ENCODE measurements at regions of chr1 and their contacts with region 1.

Region 1: GRCh38 chr1:26321315-26322041 is 3.7 kb downstream of the CD52 start:
- H3K4me3 Mint-ChIP-seq: peak overlapping the region; percentile 58
- H3K27ac Mint-ChIP-seq: peak overlapping the region; percentile 85
- H3K4me1 Mint-ChIP-seq: peaks cover 57% of the 10 kb centered on the region
- H3K27me3 Mint-ChIP-seq: no peaks in the 10 kb centered on the region

Region 2: GRCh38 chr1:26111530-26112406 is 209.7 kb before region 1 on chr1 and contains the start of gene PDIK1L:
- intact Hi-C with region 1: loop called (anchors 5 kb)
- H3K4me3 Mint-ChIP-seq: peak within 1 kb of the TSS; percentile 95
- H3K27ac Mint-ChIP-seq: peak within 1 kb of the TSS; percentile 88
- H3K4me1 Mint-ChIP-seq: peaks cover 10% of the 10 kb centered on the region
- H3K27me3 Mint-ChIP-seq: no peaks in the 10 kb centered on the region

Region 3: GRCh38 chr1:26169669-26170471 is 151.6 kb before region 1 on chr1 and contains the start of gene ZNF593:
- intact Hi-C with region 1: loop called (anchors 5 kb)
- H3K4me3 Mint-ChIP-seq: peak within 1 kb of the TSS; percentile 93
- H3K27ac Mint-ChIP-seq: peak within 1 kb of the TSS; percentile 91
- H3K4me1 Mint-ChIP-seq: peaks cover 25% of the 10 kb centered on the region
- H3K27me3 Mint-ChIP-seq: peaks cover 17% of the 10 kb centered on the region

Region 4: DNA sequence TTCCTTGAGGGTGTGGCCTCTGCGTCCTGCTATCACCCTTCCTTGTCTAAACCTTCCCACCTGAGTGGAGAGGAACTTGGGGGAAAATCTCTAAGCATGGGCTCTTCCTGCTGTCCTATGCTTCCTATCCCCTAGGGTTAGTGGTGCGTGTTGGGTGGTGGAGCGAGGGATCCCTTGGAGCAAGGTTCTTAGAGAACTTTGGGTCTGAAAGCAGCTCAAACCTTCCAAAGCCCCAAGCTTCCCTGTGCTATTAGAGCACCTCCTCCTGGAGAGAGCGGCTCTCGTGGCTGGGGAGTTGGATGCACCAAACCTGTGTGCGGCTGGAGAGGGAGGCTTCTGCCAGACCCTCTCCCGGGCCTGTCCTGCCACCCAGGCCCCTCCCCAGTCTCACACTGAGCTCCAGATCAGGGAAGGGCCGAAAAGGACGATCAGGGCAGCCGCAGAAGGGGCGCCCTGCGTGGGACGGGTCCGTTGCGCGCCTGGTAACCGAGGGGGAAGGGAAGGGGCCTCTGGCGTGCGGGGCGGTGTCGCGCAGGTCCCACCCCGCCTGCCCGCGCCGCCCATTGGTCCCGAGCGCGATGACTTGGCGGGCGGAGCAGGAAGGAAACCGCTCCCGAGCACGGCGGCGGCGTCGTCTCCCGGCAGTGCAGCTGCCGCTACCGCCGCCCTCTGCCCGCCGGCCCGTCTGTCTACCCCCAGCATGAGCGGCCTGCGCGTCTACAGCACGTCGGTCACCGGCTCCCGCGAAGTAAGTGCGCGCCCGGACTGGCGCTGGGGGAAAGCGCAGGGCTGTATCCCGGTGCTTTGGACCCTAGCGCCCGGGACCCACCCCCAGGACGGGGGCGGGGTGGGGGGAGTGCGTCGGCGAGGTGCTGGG is 41.8 kb before region 1 on chr1 and contains the start of gene SH3BGRL3:
- intact Hi-C with region 1: loop called (anchors 2 kb)
- H3K4me3 Mint-ChIP-seq: peak within 1 kb of the TSS; percentile 86
- H3K27ac Mint-ChIP-seq: peak within 1 kb of the TSS; percentile 94
- H3K4me1 Mint-ChIP-seq: peaks cover 92% of the 10 kb centered on the region
- H3K27me3 Mint-ChIP-seq: no peaks in the 10 kb centered on the region

Region 5: GRCh38 chr1:26284597-26285360 is 36.7 kb before region 1 on chr1:
- intact Hi-C with region 1: loop called (anchors 1 kb)
- H3K4me3 Mint-ChIP-seq: peak overlapping the region; percentile 51
- H3K27ac Mint-ChIP-seq: peak overlapping the region; percentile 94
- H3K4me1 Mint-ChIP-seq: peaks cover 93% of the 10 kb centered on the region
- H3K27me3 Mint-ChIP-seq: no peaks in the 10 kb centered on the region

Region 6: DNA sequence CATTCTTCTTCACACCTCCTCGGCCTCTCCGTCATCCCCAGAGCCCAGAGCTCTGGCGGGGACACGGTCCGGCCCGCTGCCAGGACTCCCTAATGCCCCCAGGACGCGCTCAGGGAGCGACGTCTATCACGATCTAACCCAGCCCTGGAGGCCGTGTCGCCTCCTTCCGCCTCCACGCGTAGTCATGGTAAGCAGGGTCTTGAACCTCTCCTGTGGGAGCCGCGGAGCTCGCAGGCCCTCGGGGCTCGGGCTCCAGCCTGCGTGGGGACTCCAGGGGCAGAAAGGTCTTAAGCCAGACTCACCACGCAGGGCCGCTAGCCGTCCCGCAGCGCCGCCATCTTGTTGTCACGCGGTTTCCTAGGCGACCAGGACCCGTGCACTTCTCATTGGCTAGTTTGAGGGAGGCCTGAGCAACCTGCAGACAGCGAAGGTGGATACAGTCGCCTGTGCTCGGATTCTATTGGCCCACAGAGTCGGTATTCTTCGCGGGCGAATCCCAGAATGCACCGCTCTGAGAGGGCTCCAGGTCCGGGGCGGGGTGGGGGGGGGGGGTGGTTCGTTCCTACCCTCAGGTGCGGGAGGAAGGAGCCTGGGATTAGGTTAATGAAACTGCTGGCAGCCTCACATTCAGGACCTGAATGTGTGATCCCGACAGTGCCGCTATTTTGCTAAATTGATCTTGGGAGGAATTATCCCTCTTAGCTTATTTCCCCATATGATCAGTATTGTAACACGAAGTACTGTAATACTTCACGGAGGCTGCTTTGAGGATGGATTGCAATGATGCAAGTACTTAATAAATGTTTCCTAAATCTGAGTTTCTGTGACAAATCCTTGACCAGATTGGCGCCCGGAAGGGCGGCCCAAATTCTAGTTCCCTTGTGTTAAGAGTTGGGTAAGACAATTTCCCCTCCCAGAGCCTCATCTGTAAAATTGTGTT is 14.9 kb before region 1 on chr1 and contains the start of gene UBXN11:
- intact Hi-C with region 1: loop called (anchors 2 kb)
- H3K4me3 Mint-ChIP-seq: peak within 1 kb of the TSS; percentile 90
- H3K27ac Mint-ChIP-seq: peak within 1 kb of the TSS; percentile 84
- H3K4me1 Mint-ChIP-seq: peaks cover 63% of the 10 kb centered on the region
- H3K27me3 Mint-ChIP-seq: no peaks in the 10 kb centered on the region